ENCODE measurements at regions of chr6 and their contacts with region 1.

Region 1: DNA sequence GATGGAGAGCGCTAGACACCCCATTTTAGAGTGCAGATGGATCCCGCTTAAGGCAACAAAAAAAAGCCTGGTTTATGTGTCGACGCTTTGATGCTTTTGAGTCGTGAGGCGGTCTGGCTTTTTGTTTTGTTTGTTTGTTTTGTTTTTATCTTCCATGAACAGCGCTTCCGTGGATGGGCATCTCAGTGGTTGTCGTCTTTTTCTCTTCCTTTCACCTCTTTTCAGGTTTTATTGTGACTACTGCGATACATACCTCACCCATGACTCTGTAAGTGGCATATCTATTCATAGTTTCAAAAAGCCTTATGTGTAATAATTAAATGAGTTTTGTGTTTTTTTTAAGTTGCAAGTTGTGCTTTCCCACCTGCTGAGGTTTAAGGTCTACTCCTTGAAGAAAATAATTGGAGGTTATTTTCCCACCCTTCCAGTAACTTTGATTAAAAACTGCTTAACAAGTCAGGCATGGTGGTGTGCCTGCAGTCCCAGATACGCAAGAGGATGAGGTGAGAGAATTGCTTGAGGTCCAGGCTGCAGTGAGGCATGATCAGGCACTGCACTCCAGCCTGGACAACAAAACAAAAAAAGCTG is 476 bp downstream of the SNRPC start:
- DNase-seq: no peak
- H3K4me3 ChIP-seq: peak overlapping the region; percentile 99
- H3K27me3 ChIP-seq: no peaks in the 10 kb centered on the region
- CTCF ChIP-seq: no peak

Region 2: GRCh38 chr6:34202329-34203201 is 555.2 kb before region 1 on chr6:
- CTCF ChIA-PET with region 1: no interaction called
- POLR2A ChIA-PET with region 1: interaction called, 11 read pairs
- DNase-seq: no peak
- H3K4me3 ChIP-seq: no peak overlapping the region
- H3K27me3 ChIP-seq: no peaks in the 10 kb centered on the region
- CTCF ChIP-seq: no peak

Region 3: DNA sequence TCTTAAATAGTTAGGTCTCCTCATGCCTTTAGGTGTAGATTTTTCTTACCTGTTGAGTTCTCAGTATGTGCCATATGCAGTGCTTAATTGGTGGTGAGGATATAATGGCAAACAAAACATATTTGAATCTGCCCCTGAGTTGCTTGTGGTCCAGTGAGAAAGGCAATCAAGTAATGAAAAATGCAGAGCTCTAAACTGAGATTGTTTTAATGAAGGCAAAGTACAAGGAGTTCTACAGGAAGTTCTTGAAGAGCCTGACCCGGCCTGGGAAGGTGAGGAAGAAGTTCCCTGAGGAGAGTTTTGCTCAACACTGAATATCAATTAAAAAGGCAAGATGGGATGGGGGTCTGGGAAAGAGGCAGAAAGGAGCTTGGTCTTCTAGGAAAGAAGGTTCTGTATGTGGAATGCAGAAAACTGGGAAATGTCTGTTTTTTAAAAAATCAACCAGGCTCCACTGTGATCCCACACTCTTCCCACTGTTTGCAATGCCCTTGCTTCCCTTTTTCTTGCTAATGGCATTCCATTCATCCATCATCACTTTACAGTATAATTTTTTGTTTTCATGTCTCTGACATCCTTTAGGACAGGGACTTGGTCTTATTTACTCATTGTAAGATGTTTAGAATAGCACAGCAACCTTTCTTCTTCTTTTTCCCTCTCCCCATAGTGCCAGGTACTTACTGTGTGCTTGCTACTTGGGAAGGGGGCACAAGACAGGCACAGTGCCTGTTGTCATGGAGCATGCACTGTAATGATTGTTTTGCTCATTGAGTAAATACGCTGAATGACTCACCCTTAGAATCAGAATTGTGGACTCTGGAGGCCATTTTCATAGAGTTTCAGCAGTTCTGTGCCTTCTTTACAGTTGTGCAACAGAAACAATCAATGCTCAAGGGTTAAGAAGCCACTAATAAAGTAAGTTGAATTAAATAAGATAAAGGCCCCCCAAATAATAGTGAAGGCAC is 195.6 kb after region 1 on chr6:
- CTCF ChIA-PET with region 1: no interaction called
- POLR2A ChIA-PET with region 1: no interaction called
- DNase-seq: peak; percentile 24
- H3K4me3 ChIP-seq: no peak overlapping the region
- H3K27me3 ChIP-seq: no peaks in the 10 kb centered on the region
- CTCF ChIP-seq: no peak

Measured in BJ (cell line).